ENCODE measurements at regions of chr4 and their contacts with region 1.

Region 1: GRCh38 chr4:46715468-46715867 is 193.6 kb downstream of the COX7B2 start:
- DNase-seq: no peak
- ATAC-seq: no peak
- H3K4me3 ChIP-seq: no peak overlapping the region
- H3K27ac ChIP-seq: no peak overlapping the region
- H3K4me1 ChIP-seq: no peaks in the 10 kb centered on the region
- H3K27me3 ChIP-seq: no peaks in the 10 kb centered on the region
- CTCF ChIP-seq: no peak
- POLR2A ChIP-seq: no peak
- RAD21 ChIP-seq: no peak

Region 2: GRCh38 chr4:46730075-46730474 is 14.6 kb after region 1 on chr4:
- CTCF ChIA-PET with region 1: no interaction called
- POLR2A ChIA-PET with region 1: interaction called, 11 read pairs
- dilution Hi-C with region 1: no loop called
- in situ Hi-C with region 1: no loop called
- intact Hi-C with region 1: no loop called
- DNase-seq: no peak
- ATAC-seq: no peak
- H3K4me3 ChIP-seq: no peak overlapping the region
- H3K27ac ChIP-seq: no peak overlapping the region
- H3K4me1 ChIP-seq: no peaks in the 10 kb centered on the region
- H3K27me3 ChIP-seq: no peaks in the 10 kb centered on the region
- CTCF ChIP-seq: no peak
- POLR2A ChIP-seq: no peak
- RAD21 ChIP-seq: no peak